ENCODE measurements at regions of chr2 and their contacts with region 1.

Region 1: GRCh38 chr2:131492418-131493198 is 411 bp upstream of the MZT2A start:
- DNase-seq: peak; percentile 91 to 92
- ATAC-seq: peak; percentile 86 to 96 (median 92)
- H3K4me3 ChIP-seq: peak overlapping the region; percentile 76 to 99 (median 90)
- H3K27ac ChIP-seq: peak overlapping the region; percentile 83 to 94 (median 90)
- H3K4me1 ChIP-seq: peaks cover 3 to 61% (median 40%) of the 10 kb centered on the region in 9 donors
- H3K27me3 ChIP-seq: no peaks in the 10 kb centered on the region
- CTCF ChIP-seq: peak; percentile 39 to 80 (median 74)

Region 2: GRCh38 chr2:130181325-130181879 is 1311.2 kb before region 1 on chr2 and contains the start of gene SMPD4:
- intact Hi-C with region 1: loop called in 1 of 10 experiments (anchors 10 kb)
- DNase-seq: peak; percentile 98 to 99
- ATAC-seq: peak; percentile 90 to 98 (median 94)
- H3K4me3 ChIP-seq: peak within 1 kb of the TSS; percentile 77 to 99 (median 94)
- H3K27ac ChIP-seq: peak within 1 kb of the TSS; percentile 77 to 98 (median 92)
- H3K4me1 ChIP-seq: peaks cover 11 to 29% (median 23%) of the 10 kb centered on the region in 9 donors
- H3K27me3 ChIP-seq: no peaks in the 10 kb centered on the region
- CTCF ChIP-seq: no peak
- total RNA-seq, gene SMPD4: 21.9 to 33.6 (median 25.9) TPM

Region 3: GRCh38 chr2:131445896-131446295 is 46.7 kb before region 1 on chr2:
- intact Hi-C with region 1: no loop called
- DNase-seq: no peak
- ATAC-seq: no peak
- H3K4me3 ChIP-seq: no peak overlapping the region
- H3K27ac ChIP-seq: no peak overlapping the region
- H3K4me1 ChIP-seq: no peaks in the 10 kb centered on the region
- H3K27me3 ChIP-seq: no peaks in the 10 kb centered on the region
- CTCF ChIP-seq: no peak

Measured in heart right ventricle (tissue), 16 donors.